Activated CD4-positive, alpha-beta T cell treated with anti-CD3 and anti-CD28 coated beads for 36 hours (primary cell): ENCODE measurements at regions of chr6 and their contacts with region 1.

Region 1: GRCh38 chr6:44074439-44075136 is 52.7 kb downstream of the MRPL14 start:
- DNase-seq: peak; percentile 89
- ATAC-seq: peak; percentile 55
- H3K4me3 Mint-ChIP-seq: peak overlapping the region; percentile 79
- H3K27ac Mint-ChIP-seq: peak overlapping the region; percentile 91
- H3K4me1 Mint-ChIP-seq: peaks cover 17% of the 10 kb centered on the region
- H3K27me3 Mint-ChIP-seq: peaks cover 16% of the 10 kb centered on the region

Region 2: GRCh38 chr6:43575772-43576551 is 498.6 kb before region 1 on chr6 and contains the starts of genes POLH and XPO5:
- CTCF ChIA-PET with region 1: no interaction called
- POLR2A ChIA-PET with region 1: no interaction called
- intact Hi-C with region 1: loop called in 1 of 2 experiments (anchors 2 kb)
- DNase-seq: peak; percentile 95
- ATAC-seq: peak; percentile 91
- H3K4me3 Mint-ChIP-seq: peak within 1 kb of the TSS; percentile 90
- H3K27ac Mint-ChIP-seq: peak within 1 kb of the TSS; percentile 86
- H3K4me1 Mint-ChIP-seq: peaks cover 44% of the 10 kb centered on the region
- H3K27me3 Mint-ChIP-seq: no peaks in the 10 kb centered on the region
- total RNA-seq, gene POLH: 35.2 to 37.9 TPM
- total RNA-seq, gene XPO5: 108 to 109 TPM

Region 3: DNA sequence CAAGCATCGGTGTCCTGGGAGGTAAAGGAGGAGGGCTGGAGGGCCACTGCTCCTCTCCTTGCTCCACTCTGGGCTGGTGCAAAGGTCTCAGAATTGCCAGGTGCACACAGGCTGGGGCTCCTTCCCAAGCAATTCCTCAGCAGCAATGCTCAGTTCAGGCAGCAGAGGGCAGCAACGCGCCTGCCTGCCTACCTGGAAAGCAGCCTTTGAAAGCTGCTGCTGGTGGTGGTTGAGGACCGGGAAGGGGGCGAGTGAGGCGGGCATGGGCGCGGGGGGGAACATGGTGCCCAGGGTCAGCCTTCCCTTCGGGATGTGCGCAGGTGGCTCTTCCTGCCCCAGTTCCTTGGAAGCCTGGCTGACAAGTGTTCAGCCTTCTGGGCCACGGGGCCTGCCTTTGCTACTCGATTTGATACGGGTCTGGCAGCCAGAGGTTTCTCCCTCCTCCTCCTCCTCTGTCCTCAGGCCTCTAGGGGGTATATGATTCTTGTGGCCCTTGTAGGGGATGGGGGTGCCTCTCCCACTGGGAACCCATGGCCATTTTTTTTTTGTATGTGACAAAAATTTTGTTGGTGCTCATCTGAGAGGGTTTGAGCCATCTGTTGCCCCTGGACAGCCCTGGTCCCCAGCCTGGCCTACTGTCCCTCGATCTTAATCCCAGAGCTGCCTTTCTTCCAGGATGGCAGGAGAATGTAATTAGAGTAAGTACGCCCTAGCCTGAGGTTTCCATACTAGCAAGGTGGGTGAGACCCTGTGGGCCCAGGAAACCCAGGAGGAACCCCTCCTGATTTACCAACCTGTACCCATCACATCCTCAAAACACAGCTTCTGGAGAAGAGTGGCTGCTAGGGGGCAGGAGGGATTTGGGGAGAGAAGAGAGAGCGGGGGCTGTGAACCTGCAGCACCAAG is 407.1 kb before region 1 on chr6:
- CTCF ChIA-PET with region 1: interaction called, 25 read pairs
- POLR2A ChIA-PET with region 1: interaction called, 4 read pairs
- intact Hi-C with region 1: loop called (anchors 1 kb)
- DNase-seq: peak; percentile 87
- ATAC-seq: peak; percentile 53
- H3K4me3 Mint-ChIP-seq: peak overlapping the region; percentile 43
- H3K27ac Mint-ChIP-seq: peak overlapping the region; percentile 77
- H3K4me1 Mint-ChIP-seq: peaks cover 44% of the 10 kb centered on the region
- H3K27me3 Mint-ChIP-seq: no peaks in the 10 kb centered on the region

Region 4: GRCh38 chr6:43758617-43759050 is 316.0 kb before region 1 on chr6:
- CTCF ChIA-PET with region 1: interaction called, 11 read pairs
- POLR2A ChIA-PET with region 1: no interaction called
- intact Hi-C with region 1: no loop called
- DNase-seq: peak; percentile 64
- ATAC-seq: peak; percentile 81
- H3K4me3 Mint-ChIP-seq: no peak overlapping the region
- H3K27ac Mint-ChIP-seq: no peak overlapping the region
- H3K4me1 Mint-ChIP-seq: no peaks in the 10 kb centered on the region
- H3K27me3 Mint-ChIP-seq: peaks cover 6% of the 10 kb centered on the region

Region 5: DNA sequence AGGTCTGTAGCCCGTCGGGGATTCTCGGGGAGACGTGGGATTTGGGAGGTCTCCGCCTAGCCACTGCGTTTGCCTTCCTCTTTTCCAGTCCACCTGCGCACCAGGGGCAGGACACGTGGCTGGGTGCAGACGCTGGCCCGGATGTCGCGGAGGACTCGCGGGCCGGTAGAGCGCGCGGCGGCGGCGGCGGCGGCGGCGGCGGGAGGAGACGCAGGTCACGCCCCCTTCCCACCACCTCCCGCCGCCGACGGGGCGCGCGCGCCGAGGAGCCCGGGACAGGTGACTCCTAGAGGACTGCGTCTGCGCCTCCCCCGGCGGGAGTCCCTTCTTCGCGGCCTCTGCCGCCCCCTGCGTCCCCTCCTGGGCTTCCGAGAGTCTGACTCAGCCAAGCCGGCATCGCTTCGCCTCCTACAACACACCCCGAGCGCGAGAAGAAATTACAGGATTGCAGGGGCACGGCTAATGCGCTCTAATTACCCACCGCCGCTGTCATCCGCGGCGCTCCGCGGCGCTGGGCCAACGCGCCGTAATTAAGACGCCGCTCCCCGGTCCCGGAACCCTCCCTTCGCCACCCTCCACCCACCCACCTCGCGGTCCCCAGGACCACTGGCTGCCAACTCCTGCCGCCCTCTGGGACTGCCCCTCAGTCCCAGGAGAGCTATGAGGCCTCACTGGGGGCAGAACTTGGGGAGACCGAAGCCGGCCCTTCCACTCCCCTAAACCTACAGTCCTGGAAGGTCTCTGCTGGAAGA is 71.8 kb before region 1 on chr6:
- CTCF ChIA-PET with region 1: interaction called, 4 read pairs
- POLR2A ChIA-PET with region 1: no interaction called
- intact Hi-C with region 1: loop called (anchors 1 to 2 kb)
- DNase-seq: peak; percentile 87
- ATAC-seq: peak; percentile 65
- H3K4me3 Mint-ChIP-seq: peak overlapping the region; percentile 58
- H3K27ac Mint-ChIP-seq: no peak overlapping the region
- H3K4me1 Mint-ChIP-seq: peaks cover 11% of the 10 kb centered on the region
- H3K27me3 Mint-ChIP-seq: peaks cover 16% of the 10 kb centered on the region

Region 6: GRCh38 chr6:44232676-44233566 is 158.3 kb after region 1 on chr6:
- CTCF ChIA-PET with region 1: no interaction called
- POLR2A ChIA-PET with region 1: no interaction called
- intact Hi-C with region 1: no loop called
- DNase-seq: no peak
- ATAC-seq: no peak
- H3K4me3 Mint-ChIP-seq: no peak overlapping the region
- H3K27ac Mint-ChIP-seq: peak overlapping the region; percentile 58
- H3K4me1 Mint-ChIP-seq: peaks cover 11% of the 10 kb centered on the region
- H3K27me3 Mint-ChIP-seq: no peaks in the 10 kb centered on the region

Region 7: DNA sequence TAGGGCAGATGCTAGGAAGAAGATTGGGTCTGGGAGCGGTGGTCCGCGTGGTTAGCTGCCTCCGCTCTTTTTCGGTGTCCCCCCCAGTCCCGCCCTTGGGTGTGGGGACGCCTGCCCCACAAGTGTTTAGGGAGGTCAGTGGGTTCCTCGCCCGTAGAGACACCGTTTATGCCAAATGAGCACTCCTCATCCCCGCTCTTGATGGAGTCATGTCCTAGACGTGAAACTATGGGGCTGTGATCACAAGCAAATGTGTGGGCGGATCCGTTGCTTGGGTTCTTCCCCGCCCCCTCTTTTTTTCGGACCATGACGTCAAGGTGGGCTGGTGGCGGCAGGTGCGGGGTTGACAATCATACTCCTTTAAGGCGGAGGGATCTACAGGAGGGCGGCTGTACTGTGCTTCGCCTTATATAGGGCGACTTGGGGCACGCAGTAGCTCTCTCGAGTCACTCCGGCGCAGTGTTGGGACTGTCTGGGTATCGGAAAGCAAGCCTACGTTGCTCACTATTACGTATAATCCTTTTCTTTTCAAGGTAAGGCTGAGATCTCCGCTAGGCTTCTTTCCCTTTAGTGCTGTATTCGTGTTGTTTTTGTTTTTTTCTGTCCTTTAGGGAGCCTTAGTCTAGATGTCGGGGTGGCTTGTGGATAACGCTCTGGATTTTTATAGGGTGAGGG is 172.2 kb after region 1 on chr6 and contains the start of gene HSP90AB1:
- CTCF ChIA-PET with region 1: no interaction called
- POLR2A ChIA-PET with region 1: no interaction called
- intact Hi-C with region 1: loop called in 1 of 2 experiments (anchors 1 kb)
- DNase-seq: peak; percentile 98
- ATAC-seq: peak; percentile 86
- H3K4me3 Mint-ChIP-seq: peak within 1 kb of the TSS; percentile 97
- H3K27ac Mint-ChIP-seq: peak within 1 kb of the TSS; percentile 99
- H3K4me1 Mint-ChIP-seq: peaks cover 44% of the 10 kb centered on the region
- H3K27me3 Mint-ChIP-seq: no peaks in the 10 kb centered on the region
- total RNA-seq, gene HSP90AB1: 2,120 to 2,263 TPM